ENCODE measurements at regions of chr1 and their contacts with region 1.

Region 1: DNA sequence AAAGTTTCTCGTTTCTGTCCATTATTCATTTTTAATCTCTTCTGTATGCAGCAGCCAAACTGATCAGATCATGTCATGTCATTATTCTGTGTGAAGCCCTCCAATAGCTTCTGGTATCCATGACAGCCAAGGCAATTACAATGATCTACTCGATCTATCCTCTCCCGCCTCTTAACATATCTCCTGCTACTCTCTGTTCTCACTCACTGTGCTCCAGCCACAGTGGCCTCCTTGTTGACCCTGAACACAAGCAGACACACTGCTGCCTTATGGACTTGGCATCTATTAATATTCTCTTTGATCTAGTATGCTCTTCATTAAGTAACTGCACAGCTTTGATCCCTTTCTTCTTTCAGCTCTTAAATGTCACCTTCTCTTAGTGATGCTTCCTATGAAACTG is 59.5 kb downstream of the TPR start:
- DNase-seq: no peak
- ATAC-seq: no peak
- H3K4me3 ChIP-seq: no peak overlapping the region
- H3K27ac ChIP-seq: no peak overlapping the region
- H3K4me1 ChIP-seq: no peaks in the 10 kb centered on the region
- H3K27me3 ChIP-seq: no peaks in the 10 kb centered on the region
- CTCF ChIP-seq: no peak

Region 2: GRCh38 chr1:185610954-185611353 is 704.6 kb before region 1 on chr1:
- intact Hi-C with region 1: no loop called
- DNase-seq: no peak
- ATAC-seq: no peak
- H3K4me3 ChIP-seq: no peak overlapping the region
- H3K27ac ChIP-seq: no peak overlapping the region
- H3K4me1 ChIP-seq: no peaks in the 10 kb centered on the region
- H3K27me3 ChIP-seq: no peaks in the 10 kb centered on the region
- CTCF ChIP-seq: no peak

Region 3: DNA sequence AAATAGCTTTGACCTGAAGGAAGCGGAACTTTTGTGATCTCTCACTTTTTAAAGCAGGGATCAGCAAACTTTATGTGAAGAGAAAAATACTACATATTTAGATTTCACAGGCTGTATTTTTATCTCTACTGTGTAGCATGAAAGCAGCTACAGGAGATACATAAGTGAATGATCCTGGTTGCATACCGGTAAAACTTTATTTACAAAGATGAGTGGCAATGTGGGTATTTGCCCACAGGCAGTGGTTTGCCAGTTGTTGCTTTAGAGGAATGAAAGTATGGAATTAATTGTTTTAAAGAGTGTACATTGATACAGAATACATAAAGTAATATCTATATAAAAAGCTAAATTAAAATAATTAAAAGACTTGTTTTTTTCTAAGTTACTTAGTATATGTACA is 77.9 kb after region 1 on chr1:
- intact Hi-C with region 1: loop called in 2 of 10 experiments (anchors 2 to 10 kb)
- DNase-seq: no peak
- ATAC-seq: no peak
- H3K4me3 ChIP-seq: no peak overlapping the region
- H3K27ac ChIP-seq: no peak overlapping the region
- H3K4me1 ChIP-seq: no peaks in the 10 kb centered on the region
- H3K27me3 ChIP-seq: no peaks in the 10 kb centered on the region
- CTCF ChIP-seq: no peak

Measured in heart right ventricle (tissue), 16 donors.